Ascending aorta (tissue), 2 donors: ENCODE measurements at regions of chr15 and their contacts with region 1.

Region 1: DNA sequence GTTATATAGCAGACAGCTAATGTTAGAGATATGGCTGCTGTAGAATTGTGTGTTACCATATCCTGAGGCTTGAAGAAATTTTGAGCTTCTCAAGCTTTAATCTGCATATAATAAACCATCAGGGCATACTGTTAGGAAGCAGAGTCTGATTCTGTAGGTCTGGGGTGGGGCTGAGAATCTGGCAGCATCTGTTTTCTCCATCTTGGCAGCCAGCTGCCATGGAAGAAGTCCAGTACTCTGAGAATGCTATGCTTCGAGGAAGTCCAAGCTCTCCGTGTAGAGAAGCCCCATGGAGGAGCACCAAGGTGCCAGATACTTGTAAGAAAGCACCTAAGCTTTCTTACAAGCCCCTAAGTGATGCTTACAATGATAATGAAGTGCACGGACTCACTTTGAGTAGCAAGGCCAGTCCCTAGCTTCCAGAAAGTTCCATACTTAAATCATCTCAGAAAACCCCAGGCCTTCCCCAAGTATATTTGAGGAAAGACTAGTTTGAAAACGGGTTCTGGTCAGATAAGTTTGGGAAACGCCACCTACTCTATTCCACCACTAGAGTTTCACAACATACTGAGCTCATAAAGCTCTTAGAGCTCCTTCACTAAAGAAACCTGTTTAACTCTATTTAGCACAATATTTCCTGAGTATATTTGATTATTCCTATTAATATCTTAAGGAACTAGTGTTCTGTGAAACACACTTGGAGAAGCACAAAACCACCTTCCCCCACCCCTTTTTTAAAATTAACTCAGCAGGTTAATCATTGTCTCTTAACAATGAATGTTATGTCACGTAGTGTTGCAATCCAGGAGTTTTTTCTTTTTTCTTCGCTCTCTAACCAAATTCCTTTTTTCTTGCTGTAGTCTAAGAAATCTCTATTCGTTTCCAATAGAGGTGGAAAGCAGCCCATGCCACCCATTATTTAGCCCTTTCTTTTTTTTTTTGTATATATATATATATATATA is 59.9 kb upstream of the RASGRP1 start:
- DNase-seq: no peak
- H3K4me3 ChIP-seq: no peak overlapping the region
- H3K27ac ChIP-seq: no peak overlapping the region
- H3K4me1 ChIP-seq: no peaks in the 10 kb centered on the region
- H3K27me3 ChIP-seq: no peaks in the 10 kb centered on the region
- CTCF ChIP-seq: no peak

Region 2: DNA sequence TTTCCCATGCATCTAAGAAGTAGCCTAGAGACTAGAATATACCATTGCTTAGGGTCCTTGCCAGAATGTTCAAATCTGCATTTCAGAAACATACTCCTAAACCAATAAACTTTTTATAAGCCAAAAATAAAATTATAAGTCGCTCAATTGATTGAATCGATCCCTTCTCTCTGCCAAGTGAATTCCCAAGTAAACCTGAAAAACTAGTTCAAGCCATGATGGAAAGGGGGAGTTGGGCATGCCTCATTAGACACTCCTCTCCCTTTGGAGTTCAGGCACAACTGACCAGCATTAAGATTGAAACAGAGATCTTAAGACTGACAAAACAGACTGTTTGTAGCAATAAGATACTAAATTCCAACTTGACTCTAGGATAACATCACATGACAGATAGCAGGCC is 53.7 kb after region 1 on chr15:
- intact Hi-C with region 1: loop called (anchors 5 kb)
- DNase-seq: no peak
- H3K4me3 ChIP-seq: no peak overlapping the region
- H3K27ac ChIP-seq: no peak overlapping the region
- H3K4me1 ChIP-seq: no peaks in the 10 kb centered on the region
- H3K27me3 ChIP-seq: no peaks in the 10 kb centered on the region
- CTCF ChIP-seq: no peak

Region 3: GRCh38 chr15:39358441-39359041 is 734.0 kb after region 1 on chr15:
- intact Hi-C with region 1: no loop called
- DNase-seq: peak in 1 of 2 donors; percentile 73
- H3K4me3 ChIP-seq: no peak overlapping the region
- H3K27ac ChIP-seq: peak overlapping the region in 1 of 2 donors; percentile 52
- H3K4me1 ChIP-seq: peaks cover 0 to 6% of the 10 kb centered on the region in 2 donors
- H3K27me3 ChIP-seq: no peaks in the 10 kb centered on the region
- CTCF ChIP-seq: no peak